BJ (cell line): ENCODE measurements at regions of chr14 and their contacts with region 1.

Region 1: DNA sequence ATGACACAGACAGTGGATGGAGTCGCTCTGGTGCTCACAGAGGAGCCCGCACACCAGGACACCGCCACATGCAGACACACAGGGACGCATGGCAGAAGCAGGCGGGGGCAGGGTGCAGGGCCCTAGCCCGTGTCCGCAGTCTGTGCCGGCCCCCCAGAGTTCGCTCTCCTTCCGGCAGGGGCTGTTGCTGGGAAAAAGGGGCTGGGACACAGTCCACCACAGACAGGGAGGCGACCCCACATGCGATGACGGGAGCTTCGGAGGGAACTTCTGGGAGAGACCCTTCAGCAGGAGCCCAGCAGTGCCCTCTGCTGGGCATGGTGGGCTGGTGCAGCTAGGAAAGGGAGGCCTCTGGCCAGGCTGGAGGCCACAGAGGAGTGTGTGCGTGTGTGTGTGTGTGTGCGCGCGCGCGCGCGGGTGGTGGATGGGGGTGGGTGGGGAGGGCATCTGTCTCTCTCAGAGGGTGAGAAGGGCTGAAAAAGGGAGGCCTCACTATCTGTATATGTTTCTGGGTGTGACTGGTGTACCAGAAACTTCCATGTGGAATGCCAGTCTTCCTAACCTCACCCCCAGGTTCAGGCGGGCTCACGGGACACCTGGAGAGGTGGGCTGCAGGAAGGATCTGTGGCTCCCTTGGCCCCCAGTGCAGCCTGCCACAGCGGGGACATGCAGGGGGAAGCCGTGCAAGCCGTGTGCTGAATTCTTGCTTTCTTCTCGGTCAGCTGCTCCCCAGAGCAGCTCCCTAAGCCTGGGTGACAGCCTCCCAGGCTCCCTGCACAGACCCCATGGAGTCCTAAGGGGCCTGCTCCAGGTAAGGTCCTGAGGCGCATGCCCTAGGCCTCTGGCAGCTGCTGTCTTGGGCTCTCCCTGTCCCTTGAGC is 60.7 kb downstream of the PLEKHG3 start:
- DNase-seq: no peak
- H3K4me3 ChIP-seq: peak overlapping the region; percentile 28
- H3K27me3 ChIP-seq: no peaks in the 10 kb centered on the region
- CTCF ChIP-seq: peak; percentile 96

Region 2: GRCh38 chr14:64569184-64569631 is 195.7 kb before region 1 on chr14:
- CTCF ChIA-PET with region 1: no interaction called
- POLR2A ChIA-PET with region 1: no interaction called
- DNase-seq: peak; percentile 59
- H3K4me3 ChIP-seq: no peak overlapping the region
- H3K27me3 ChIP-seq: no peaks in the 10 kb centered on the region
- CTCF ChIP-seq: no peak

Region 3: GRCh38 chr14:64671591-64671990 is 93.3 kb before region 1 on chr14:
- CTCF ChIA-PET with region 1: interaction called, 63 read pairs
- POLR2A ChIA-PET with region 1: no interaction called
- DNase-seq: no peak
- H3K4me3 ChIP-seq: no peak overlapping the region
- H3K27me3 ChIP-seq: no peaks in the 10 kb centered on the region
- CTCF ChIP-seq: peak; percentile 79

Region 4: DNA sequence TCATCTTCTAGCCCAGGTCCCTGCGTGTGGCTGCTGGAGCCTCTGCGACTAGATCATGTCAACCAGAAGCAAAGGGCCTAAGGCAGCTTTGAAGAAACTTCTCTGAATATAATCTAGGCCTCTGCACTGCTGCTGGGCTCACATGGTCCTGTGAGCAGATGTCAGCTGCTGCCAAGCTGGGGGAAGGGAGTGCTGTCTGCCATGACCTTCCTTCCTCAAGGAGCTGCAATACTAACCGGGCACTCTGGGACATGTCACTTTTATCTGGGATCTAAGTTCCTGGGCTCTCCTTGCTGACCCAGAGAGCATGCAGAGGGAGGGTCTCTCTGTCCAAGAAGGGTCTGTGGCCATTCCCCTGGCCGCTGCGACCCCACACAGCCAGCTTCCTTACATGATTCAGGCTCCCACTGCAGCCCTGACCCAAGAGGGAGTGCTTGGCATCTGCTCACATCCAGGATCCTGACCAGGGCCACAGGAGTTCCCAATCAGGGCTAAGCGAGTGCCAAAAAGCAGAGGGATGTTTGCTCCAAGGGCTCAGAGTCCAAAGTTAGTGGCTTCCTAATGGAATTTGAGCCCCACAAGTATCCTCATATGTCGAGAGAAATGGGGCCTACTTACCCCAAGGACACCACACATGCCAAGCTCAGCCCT is 13.3 kb after region 1 on chr14:
- CTCF ChIA-PET with region 1: interaction called, 20 read pairs
- POLR2A ChIA-PET with region 1: no interaction called
- DNase-seq: no peak
- H3K4me3 ChIP-seq: no peak overlapping the region
- H3K27me3 ChIP-seq: 0 out of 2 replicates have a peak, but pooled peaks cover 3% of the 10 kb centered on the region
- CTCF ChIP-seq: no peak